ENCODE measurements at regions of chr17 and their contacts with region 1.

Region 1: GRCh38 chr17:42067351-42068091 is 17.1 kb upstream of the C17orf113 start:
- DNase-seq: peak; percentile 56 to 83 (median 66)
- ATAC-seq: peak; percentile 53
- H3K4me3 ChIP-seq: no peak overlapping the region
- H3K4me3 Mint-ChIP-seq: no peak overlapping the region
- H3K27ac ChIP-seq: no peak overlapping the region
- H3K27ac Mint-ChIP-seq: no peak overlapping the region
- H3K4me1 ChIP-seq: peaks cover 24% of the 10 kb centered on the region
- H3K4me1 Mint-ChIP-seq: peaks cover 31% of the 10 kb centered on the region
- H3K27me3 ChIP-seq: peaks cover 8 to 11% of the 10 kb centered on the region in 2 experiments
- H3K27me3 Mint-ChIP-seq: peaks cover 24% of the 10 kb centered on the region
- CTCF ChIP-seq: peak; percentile 96

Region 2: GRCh38 chr17:42101513-42102319 is 34.2 kb after region 1 on chr17:
- CTCF ChIA-PET with region 1: interaction called, 11 read pairs
- POLR2A ChIA-PET with region 1: no interaction called
- intact Hi-C with region 1: no loop called
- DNase-seq: peak; percentile 35 to 72 (median 51)
- ATAC-seq: peak; percentile 58
- H3K4me3 ChIP-seq: no peak overlapping the region
- H3K4me3 Mint-ChIP-seq: no peak overlapping the region
- H3K27ac ChIP-seq: no peak overlapping the region
- H3K27ac Mint-ChIP-seq: no peak overlapping the region
- H3K4me1 ChIP-seq: peaks cover 14% of the 10 kb centered on the region
- H3K4me1 Mint-ChIP-seq: no peaks in the 10 kb centered on the region
- H3K27me3 ChIP-seq: peaks cover 5 to 10% of the 10 kb centered on the region in 2 experiments
- H3K27me3 Mint-ChIP-seq: peaks cover 11% of the 10 kb centered on the region
- CTCF ChIP-seq: peak; percentile 80

Region 3: GRCh38 chr17:42112552-42113176 is 45.1 kb after region 1 on chr17 and contains the start of gene DHX58:
- CTCF ChIA-PET with region 1: no interaction called
- POLR2A ChIA-PET with region 1: interaction called, 7 read pairs
- intact Hi-C with region 1: loop called (anchors 1 kb)
- DNase-seq: peak; percentile 65 to 93 (median 73)
- ATAC-seq: peak; percentile 79
- H3K4me3 ChIP-seq: peak within 1 kb of the TSS; percentile 58
- H3K4me3 Mint-ChIP-seq: peak within 1 kb of the TSS; percentile 92
- H3K27ac ChIP-seq: peak within 1 kb of the TSS; percentile 66 to 79
- H3K27ac Mint-ChIP-seq: peak within 1 kb of the TSS; percentile 87
- H3K4me1 ChIP-seq: peaks cover 48% of the 10 kb centered on the region
- H3K4me1 Mint-ChIP-seq: peaks cover 50% of the 10 kb centered on the region
- H3K27me3 ChIP-seq: no peaks in the 10 kb centered on the region
- H3K27me3 Mint-ChIP-seq: no peaks in the 10 kb centered on the region
- CTCF ChIP-seq: no peak
- total RNA-seq, gene DHX58: 33.5 to 35.6 TPM

Measured in CD4-positive, alpha-beta T cell (primary cell).